ENCODE measurements at regions of chr2 and their contacts with region 1.

Region 1: DNA sequence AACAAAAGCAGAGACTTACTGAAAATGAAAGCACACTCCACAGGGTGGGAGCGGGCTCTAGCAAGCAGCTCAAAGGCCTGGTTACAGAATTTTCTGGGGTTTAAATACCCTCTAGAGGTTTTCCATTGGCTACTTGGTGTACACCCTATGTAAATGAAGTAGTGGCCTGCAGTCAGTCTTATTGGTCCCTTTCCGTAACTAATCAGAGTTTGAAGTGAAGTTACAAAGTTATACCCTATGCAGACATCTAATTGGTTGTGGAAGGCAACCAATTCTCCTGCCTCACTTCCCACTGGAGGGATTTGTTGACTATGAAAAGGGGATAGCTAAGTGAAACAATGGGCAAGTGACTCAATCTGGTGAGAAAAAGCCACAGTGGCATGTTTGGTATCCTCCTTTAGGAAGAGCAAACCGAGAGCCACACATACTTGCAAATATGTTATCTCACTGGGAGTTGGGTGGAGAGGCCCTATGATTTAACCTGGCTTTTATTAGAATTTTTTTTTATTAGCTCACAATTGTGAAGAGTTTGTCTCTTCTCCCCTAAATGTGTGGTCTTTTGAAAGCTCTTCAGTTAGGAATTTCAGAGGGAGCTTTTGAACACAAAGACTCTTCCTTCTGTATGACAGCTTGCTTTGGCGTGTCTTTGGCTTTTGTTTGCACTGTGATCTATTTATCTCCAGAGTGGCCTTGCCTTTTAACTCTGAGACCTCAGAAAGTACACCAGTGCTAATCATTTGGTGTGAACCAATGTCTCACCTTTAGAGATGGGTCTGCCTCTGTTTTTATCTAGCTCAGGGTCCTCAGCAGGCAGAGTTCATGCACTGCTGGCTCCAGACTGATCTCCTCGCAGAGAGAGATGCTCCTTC is 69.6 kb downstream of the MAP4K4 start:
- DNase-seq: no peak
- ATAC-seq: no peak
- H3K4me3 ChIP-seq: no peak overlapping the region
- H3K27ac ChIP-seq: peak overlapping the region in 1 of 4 donors; percentile 10
- H3K4me1 ChIP-seq: peaks cover 40% of the 10 kb centered on the region
- H3K27me3 ChIP-seq: no peaks in the 10 kb centered on the region
- CTCF ChIP-seq: no peak
- POLR2A ChIP-seq: no peak

Region 2: DNA sequence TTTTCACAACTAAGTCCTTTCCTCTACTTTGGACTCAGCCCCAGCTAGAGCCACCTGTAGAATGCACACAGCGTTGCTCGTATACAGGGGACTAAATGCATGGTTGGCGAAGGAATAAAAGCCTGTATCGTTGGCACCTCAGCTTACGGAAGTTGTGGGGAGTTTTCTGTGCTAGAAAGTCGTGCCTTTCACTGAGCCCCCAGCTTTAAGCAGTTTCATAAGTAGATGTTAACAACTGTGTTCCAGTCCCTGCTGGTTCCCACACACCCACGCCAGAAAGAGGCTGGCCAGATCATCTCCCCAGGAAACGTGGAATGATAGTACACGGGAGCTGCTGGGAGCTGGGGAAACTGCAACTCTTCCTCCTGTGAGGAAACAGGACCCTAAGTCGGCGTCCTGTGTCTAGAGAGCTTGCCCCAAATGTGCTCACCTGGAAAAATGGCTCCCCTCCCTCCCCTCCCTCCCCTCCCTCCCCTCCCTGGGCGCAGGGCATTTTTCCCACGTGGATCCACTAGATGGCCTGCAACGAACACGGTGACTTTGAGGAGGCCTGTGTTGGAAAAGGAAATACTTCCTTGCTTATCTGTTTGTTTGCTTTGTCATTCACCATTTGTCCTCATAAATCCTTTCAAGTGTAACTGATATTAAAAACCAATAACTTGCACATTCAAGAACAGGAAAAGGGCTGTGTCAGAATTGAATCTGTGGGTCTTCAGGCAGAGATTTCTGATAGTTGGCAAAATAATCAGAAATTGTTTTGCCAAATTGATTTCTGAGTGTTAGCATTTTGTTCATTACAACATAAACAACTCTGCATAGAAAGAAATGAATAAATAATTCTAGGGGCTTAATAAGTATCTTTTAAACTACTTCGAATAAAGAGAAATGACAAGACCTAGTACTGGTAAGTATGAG is 248.3 kb before region 1 on chr2:
- intact Hi-C with region 1: no loop called
- DNase-seq: peak; percentile 42 to 64 (median 56)
- ATAC-seq: peak; percentile 82
- H3K4me3 ChIP-seq: no peak overlapping the region
- H3K27ac ChIP-seq: peak overlapping the region in 2 of 4 donors; percentile 5 to 13
- H3K4me1 ChIP-seq: peaks cover 19% of the 10 kb centered on the region
- H3K27me3 ChIP-seq: no peaks in the 10 kb centered on the region
- CTCF ChIP-seq: peak in 6 of 7 experiments; percentile 6 to 52 (median 45)
- POLR2A ChIP-seq: no peak

Region 3: GRCh38 chr2:101781326-101781725 is 14.2 kb after region 1 on chr2:
- intact Hi-C with region 1: loop called (anchors 2 kb)
- DNase-seq: peak in 1 of 4 donors; percentile 20
- ATAC-seq: no peak
- H3K4me3 ChIP-seq: no peak overlapping the region
- H3K27ac ChIP-seq: no peak overlapping the region
- H3K4me1 ChIP-seq: no peaks in the 10 kb centered on the region
- H3K27me3 ChIP-seq: no peaks in the 10 kb centered on the region
- CTCF ChIP-seq: no peak
- POLR2A ChIP-seq: no peak

Measured in body of pancreas (tissue), 4 donors.